GM10248 (cell line): ENCODE measurements at regions of chr6 and their contacts with region 1.

Region 1: GRCh38 chr6:41787219-41787917 is at the start of gene TOMM6:
- DNase-seq: peak; percentile 93
- CTCF ChIP-seq: peak; percentile 92

Region 2: DNA sequence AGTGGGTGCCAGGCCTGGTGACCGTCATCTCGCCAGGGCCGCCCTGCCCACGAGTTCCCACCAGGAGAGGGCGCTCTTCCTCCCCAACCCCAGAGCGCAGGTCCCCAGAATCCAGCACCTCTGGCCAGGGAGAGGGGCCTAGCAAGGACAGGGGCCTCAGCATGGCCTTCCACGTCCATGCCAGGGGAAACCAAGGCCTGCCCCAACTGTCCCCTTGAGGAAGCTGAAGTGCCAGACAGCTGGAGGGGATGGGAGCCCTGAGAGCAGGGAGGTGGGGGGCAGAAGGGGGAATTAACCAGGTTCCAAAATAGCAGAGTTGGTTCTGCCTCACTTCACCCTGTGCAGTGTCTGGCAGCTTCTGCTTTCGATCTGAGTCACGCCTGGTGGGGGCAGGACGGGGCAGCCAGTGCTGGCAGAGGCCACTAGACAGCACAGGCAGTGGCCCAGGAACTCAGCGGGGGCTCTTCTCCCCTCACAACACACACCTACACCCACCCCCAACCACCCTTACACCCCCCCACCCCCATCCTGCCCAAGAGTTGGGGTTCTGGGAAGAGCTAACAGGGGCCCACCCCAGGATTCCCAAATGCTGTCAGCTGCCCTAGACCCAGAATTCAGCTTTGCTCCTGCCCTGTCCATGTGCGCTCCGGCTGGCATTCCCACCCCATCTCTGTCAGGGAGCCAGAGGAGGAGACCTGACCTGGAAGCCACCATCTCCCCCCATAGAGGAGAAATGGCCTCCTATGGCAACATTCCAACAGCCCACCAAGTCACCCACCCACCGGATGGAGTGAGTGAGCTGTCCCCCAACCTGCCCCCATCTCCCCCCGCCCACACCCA is 81.2 kb before region 1 on chr6:
- CTCF ChIA-PET with region 1: interaction called, 11 read pairs
- POLR2A ChIA-PET with region 1: no interaction called
- DNase-seq: peak; percentile 92
- CTCF ChIP-seq: peak; percentile 90

Region 3: DNA sequence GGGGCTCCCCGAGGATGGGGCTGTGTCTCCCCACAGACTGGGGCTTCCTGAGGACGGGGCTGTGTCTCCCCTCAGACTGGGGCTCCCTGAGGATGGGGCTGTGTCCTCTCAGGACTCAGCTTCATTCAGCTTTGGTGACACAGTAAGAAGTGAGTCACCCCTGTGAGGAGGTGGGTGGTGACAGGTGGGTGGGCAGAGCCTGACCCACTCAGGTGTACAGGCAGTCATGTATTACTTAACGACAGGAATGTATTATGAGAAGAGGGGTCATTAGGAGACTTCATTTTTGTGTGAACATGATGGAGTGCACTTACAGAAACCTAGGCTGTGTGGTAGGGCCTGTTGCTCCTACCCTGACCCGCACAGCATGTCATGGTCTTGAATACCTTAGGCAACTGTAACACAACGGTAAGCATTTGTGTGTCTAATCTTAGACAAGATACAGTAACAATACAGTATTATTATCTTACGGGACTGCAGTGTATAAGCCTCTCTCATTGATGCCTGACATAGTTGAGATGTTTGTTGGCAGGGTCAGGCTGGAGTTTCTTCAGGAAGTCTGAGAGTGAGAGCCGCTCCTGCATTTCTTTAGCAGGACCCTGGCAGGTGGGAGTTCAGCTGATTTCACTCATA is 29.3 kb before region 1 on chr6:
- CTCF ChIA-PET with region 1: no interaction called
- POLR2A ChIA-PET with region 1: no interaction called
- DNase-seq: no peak
- CTCF ChIP-seq: no peak

Region 4: DNA sequence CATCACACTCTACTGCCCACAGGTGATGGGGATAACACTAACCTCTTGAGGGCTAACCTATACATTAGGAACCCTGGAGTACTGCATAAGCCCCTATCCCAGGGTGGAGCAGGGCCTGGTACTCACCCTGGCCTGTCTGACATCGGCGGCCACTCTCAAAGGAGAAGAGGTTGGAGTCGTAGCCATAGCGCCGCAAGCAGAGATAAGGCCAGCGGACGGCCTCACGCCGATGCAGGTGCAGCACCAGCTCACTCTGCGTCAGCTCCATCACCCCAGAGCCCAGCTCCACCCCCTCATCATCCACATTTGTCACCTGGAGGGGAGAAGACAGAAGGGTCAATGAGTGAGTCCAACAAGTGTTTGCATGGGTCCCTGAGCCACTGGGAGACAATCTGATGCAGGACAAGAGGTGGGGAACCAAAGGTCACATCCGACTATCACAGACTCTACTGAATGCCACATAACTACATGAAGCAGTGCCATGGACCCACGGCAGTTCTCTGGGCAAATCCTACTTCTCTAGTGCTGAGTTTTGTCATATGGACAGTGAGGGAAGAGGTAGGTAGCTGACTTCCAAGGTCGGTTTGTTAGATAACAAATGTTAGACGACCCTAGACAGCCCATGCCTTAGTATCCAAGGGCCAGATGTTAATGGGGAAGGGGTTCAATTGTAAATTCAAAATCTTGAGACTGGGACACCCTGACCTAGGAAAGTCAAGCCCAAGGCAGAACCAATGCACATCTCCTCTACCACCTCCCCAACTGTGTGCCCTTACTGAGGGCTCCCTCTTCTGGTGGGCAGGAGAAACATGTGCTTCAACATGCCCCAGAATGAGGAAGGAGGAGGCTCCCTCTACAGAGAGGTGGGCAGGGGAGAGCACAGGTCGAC is 11.8 kb before region 1 on chr6:
- CTCF ChIA-PET with region 1: interaction called, 52 read pairs
- POLR2A ChIA-PET with region 1: no interaction called
- DNase-seq: peak; percentile 81
- CTCF ChIP-seq: peak; percentile 93

Region 5: GRCh38 chr6:41836022-41836659 is 48.8 kb after region 1 on chr6:
- CTCF ChIA-PET with region 1: interaction called, 14 read pairs
- POLR2A ChIA-PET with region 1: no interaction called
- DNase-seq: no peak
- CTCF ChIP-seq: no peak

Region 6: DNA sequence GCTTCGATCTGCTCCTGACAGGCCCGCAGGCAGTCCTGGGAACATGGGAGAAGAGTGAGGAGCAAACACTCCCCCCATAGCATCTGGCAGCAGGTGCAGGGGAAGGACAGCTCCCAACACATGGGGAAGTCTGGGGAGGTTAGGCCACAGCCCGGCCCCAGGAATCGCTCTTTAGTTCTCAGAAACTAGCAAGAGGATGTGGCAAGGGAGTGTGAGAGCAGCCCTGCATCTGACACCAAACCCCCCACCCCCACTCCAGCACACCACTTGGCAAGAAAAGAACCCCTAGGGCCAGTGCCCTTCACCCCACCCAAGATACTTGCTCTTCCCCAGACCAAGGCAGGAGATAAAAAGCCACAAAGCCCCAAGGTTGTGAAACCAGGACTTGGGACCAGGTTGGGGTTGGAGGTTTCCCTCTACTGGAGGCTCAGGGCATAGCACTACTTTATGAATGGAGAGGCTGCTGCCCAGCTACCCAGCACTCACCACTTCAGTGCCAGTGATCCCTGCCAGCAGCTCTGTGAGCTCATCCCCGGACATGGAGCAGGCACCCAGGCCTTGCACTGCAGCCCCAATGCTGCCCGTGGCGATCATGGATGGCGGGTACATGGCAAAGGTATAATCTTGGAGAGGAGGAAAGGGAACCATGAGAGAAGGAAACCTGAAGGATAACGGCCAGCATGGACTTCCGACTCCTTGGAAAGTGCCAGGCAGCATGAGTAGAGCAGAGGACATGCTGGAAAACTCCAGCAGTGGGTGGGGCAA is 148.9 kb after region 1 on chr6:
- CTCF ChIA-PET with region 1: interaction called, 26 read pairs
- POLR2A ChIA-PET with region 1: no interaction called
- DNase-seq: peak; percentile 78
- CTCF ChIP-seq: peak; percentile 82

Region 7: GRCh38 chr6:42050266-42051032 is 263.1 kb after region 1 on chr6 and contains the start of gene TAF8:
- CTCF ChIA-PET with region 1: interaction called, 253 read pairs
- POLR2A ChIA-PET with region 1: no interaction called
- DNase-seq: peak; percentile 94
- CTCF ChIP-seq: no peak